Naive thymus-derived CD4-positive, alpha-beta T cell (primary cell): ENCODE measurements at regions of chr7 and their contacts with region 1.

Region 1: GRCh38 chr7:151080522-151081169 is at the start of gene FASTK:
- DNase-seq: peak; percentile 79 to 89 (median 87)
- ATAC-seq: peak; percentile 85
- H3K4me3 ChIP-seq: peak within 1 kb of the TSS; percentile 86
- H3K4me3 Mint-ChIP-seq: peak within 1 kb of the TSS; percentile 87 to 97 (median 88)
- H3K27ac ChIP-seq: peak within 1 kb of the TSS; percentile 93
- H3K27ac Mint-ChIP-seq: peak within 1 kb of the TSS; percentile 72 to 92 (median 88)
- H3K4me1 ChIP-seq: peaks cover 41 to 44% of the 10 kb centered on the region in 2 donors
- H3K4me1 Mint-ChIP-seq: peaks cover 21 to 52% (median 39%) of the 10 kb centered on the region in 7 donors
- H3K27me3 ChIP-seq: no peaks in the 10 kb centered on the region
- H3K27me3 Mint-ChIP-seq: peaks cover 0 to 12% (median 0%) of the 10 kb centered on the region in 5 donors
- total RNA-seq, gene FASTK: 94.1 to 136 (median 101) TPM

Region 2: GRCh38 chr7:149714050-149714909 is 1366.4 kb before region 1 on chr7:
- CTCF ChIA-PET with region 1: no interaction called
- POLR2A ChIA-PET with region 1: no interaction called
- intact Hi-C with region 1: loop called in 1 of 2 experiments (anchors 10 kb)
- DNase-seq: peak; percentile 68 to 89 (median 84)
- ATAC-seq: peak; percentile 99
- H3K4me3 ChIP-seq: peak overlapping the region; percentile 75
- H3K4me3 Mint-ChIP-seq: peak overlapping the region; percentile 71 to 87 (median 80)
- H3K27ac ChIP-seq: peak overlapping the region; percentile 72
- H3K27ac Mint-ChIP-seq: peak overlapping the region in 4 of 9 donors; percentile 5 to 72 (median 54)
- H3K4me1 ChIP-seq: peaks cover 10 to 13% of the 10 kb centered on the region in 2 donors
- H3K4me1 Mint-ChIP-seq: peaks cover 12 to 26% (median 19%) of the 10 kb centered on the region in 7 donors
- H3K27me3 ChIP-seq: no peaks in the 10 kb centered on the region
- H3K27me3 Mint-ChIP-seq: peaks cover 0 to 4% (median 0%) of the 10 kb centered on the region in 5 donors

Region 3: DNA sequence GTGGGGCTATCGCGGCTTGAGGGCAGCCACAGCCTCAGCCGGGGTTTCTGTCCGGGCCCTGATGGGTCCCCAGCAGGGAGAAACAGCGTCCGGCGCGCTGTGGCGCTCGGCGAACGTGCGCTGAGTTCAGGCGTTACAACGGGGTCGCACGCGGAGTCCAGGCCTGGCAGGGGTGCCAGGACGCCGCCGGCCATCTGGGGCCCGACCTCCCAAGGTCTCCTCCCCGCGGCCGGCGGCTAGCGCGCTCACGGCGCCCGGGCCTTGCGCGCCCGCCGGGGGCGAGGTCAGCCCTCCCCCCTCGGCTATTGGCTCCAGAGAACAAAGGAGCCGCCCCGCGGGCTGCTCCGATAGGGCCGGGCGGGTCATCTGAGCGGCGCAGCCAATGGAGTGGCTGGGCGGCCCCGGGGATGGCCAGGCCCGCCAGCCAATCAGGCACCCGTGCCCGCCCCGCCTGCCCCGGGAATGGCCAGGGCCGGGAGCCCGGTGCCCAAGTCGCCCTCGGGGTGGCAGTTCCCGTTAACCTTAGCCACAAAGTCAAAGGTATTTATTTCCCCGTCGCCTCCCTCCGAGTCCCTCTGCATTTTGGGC is 701.7 kb before region 1 on chr7 and contains the start of gene ZNF775:
- CTCF ChIA-PET with region 1: no interaction called
- POLR2A ChIA-PET with region 1: no interaction called
- intact Hi-C with region 1: loop called in 1 of 2 experiments (anchors 5 kb)
- DNase-seq: peak; percentile 87 to 96 (median 90)
- ATAC-seq: peak; percentile 98
- H3K4me3 ChIP-seq: peak within 1 kb of the TSS; percentile 68
- H3K4me3 Mint-ChIP-seq: peak within 1 kb of the TSS; percentile 84 to 95 (median 90)
- H3K27ac ChIP-seq: peak within 1 kb of the TSS; percentile 91
- H3K27ac Mint-ChIP-seq: peak within 1 kb of the TSS; percentile 61 to 95 (median 86)
- H3K4me1 ChIP-seq: peaks cover 4 to 30% of the 10 kb centered on the region in 2 donors
- H3K4me1 Mint-ChIP-seq: peaks cover 32 to 57% (median 46%) of the 10 kb centered on the region in 7 donors
- H3K27me3 ChIP-seq: no peaks in the 10 kb centered on the region
- H3K27me3 Mint-ChIP-seq: no peaks in the 10 kb centered on the region
- total RNA-seq, gene ZNF775: 1.1 to 5.7 (median 4.3) TPM

Region 4: GRCh38 chr7:150974468-150975391 is 105.9 kb before region 1 on chr7:
- CTCF ChIA-PET with region 1: interaction called, 3 read pairs
- POLR2A ChIA-PET with region 1: interaction called, 3 read pairs
- intact Hi-C with region 1: loop called in 1 of 2 experiments (anchors 1 kb)
- DNase-seq: peak; percentile 63 to 84 (median 80)
- ATAC-seq: peak; percentile 85
- H3K4me3 ChIP-seq: peak overlapping the region; percentile 63
- H3K4me3 Mint-ChIP-seq: peak overlapping the region; percentile 85 to 92 (median 88)
- H3K27ac ChIP-seq: peak overlapping the region; percentile 73
- H3K27ac Mint-ChIP-seq: peak overlapping the region; percentile 59 to 97 (median 95)
- H3K4me1 ChIP-seq: peaks cover 20 to 47% of the 10 kb centered on the region in 2 donors
- H3K4me1 Mint-ChIP-seq: peaks cover 33 to 62% (median 55%) of the 10 kb centered on the region in 7 donors
- H3K27me3 ChIP-seq: peaks cover 7 to 13% of the 10 kb centered on the region in 2 donors
- H3K27me3 Mint-ChIP-seq: peaks cover 9 to 36% (median 25%) of the 10 kb centered on the region in 5 donors

Region 5: DNA sequence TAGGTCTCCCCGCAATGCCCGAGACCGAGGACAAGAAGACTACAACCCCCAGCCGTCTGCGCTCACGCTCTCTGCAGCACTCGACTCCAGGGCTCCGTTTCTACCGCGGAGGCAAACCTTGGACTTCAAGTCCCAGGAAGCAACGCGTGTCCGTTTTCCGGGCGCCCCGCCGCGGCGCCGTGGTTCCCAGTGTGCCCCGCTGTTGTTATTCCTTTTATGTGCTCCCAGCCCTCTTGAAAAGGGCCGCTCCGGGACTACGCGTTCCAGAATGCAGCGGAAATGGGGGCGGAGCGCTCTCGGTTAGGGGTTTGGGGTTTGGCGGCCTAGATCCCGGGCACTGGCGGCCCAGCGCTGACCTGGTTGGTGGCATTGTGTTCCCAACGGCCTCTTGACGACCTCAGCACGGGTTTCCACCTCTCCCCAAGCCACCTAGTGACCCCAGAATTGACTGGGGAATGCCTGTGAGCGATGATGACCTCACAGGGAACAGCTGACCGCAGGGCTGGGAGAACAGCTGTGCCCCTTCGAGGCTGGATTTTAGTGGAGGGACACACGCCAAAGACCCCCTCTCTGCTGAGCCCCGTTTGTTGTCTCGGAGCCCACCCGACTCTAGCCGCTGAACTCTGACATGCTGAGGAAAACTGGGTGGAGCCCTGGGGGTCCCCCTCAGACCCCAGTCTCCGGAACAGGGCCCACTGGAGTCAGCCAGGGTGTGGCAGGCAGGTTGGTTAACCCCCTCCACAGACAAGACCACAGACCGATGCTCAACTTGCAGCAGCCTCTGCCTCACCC is 22.5 kb before region 1 on chr7:
- CTCF ChIA-PET with region 1: interaction called, 15 read pairs
- POLR2A ChIA-PET with region 1: interaction called, 14 read pairs
- intact Hi-C with region 1: loop called (anchors 1 kb)
- DNase-seq: peak; percentile 80 to 99 (median 97)
- ATAC-seq: peak; percentile 96
- H3K4me3 ChIP-seq: peak overlapping the region; percentile 78
- H3K4me3 Mint-ChIP-seq: peak overlapping the region; percentile 91 to 99 (median 94)
- H3K27ac ChIP-seq: peak overlapping the region; percentile 92
- H3K27ac Mint-ChIP-seq: peak overlapping the region; percentile 86 to 96 (median 93)
- H3K4me1 ChIP-seq: peaks cover 25 to 32% of the 10 kb centered on the region in 2 donors
- H3K4me1 Mint-ChIP-seq: peaks cover 25 to 41% (median 38%) of the 10 kb centered on the region in 7 donors
- H3K27me3 ChIP-seq: no peaks in the 10 kb centered on the region
- H3K27me3 Mint-ChIP-seq: no peaks in the 10 kb centered on the region

Region 6: DNA sequence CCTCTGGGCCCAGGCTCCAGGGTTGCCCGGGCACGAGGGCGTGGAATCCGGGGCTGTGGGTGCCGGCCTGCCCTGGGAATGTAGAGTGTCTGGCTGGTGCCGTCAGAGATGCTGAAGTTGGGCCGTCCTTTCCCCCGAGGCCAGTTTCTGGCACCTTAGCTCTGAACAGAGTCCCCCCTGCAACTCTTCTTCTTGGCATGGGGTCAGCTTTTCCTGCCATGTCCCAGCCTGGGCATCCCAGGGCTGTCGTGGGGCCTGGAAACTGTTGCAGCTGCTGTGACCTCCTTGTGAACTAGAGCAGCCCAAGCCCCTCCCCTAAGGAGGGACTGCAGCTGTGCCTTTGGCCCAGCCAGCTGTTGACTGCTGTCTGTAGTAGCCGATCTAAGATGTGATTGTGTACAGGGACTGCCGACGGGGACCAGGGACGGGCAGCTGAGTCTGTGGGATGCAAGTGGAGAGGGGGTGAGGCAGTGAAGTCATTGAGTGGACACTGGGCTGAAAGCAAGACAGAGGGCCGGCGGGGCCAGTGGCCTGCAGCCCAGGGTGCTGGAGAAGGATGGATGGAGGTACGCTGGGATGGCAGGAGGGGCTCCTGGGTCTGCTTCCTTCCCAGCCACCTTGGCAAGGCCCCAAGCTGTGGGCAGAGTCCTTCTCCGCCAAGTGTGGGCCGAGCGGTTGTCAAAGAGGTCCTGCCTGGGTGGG is 51.1 kb after region 1 on chr7:
- CTCF ChIA-PET with region 1: no interaction called
- POLR2A ChIA-PET with region 1: no interaction called
- intact Hi-C with region 1: no loop called
- DNase-seq: no peak
- ATAC-seq: no peak
- H3K4me3 ChIP-seq: no peak overlapping the region
- H3K4me3 Mint-ChIP-seq: no peak overlapping the region
- H3K27ac ChIP-seq: no peak overlapping the region
- H3K27ac Mint-ChIP-seq: no peak overlapping the region
- H3K4me1 ChIP-seq: no peaks in the 10 kb centered on the region
- H3K4me1 Mint-ChIP-seq: no peaks in the 10 kb centered on the region
- H3K27me3 ChIP-seq: no peaks in the 10 kb centered on the region
- H3K27me3 Mint-ChIP-seq: no peaks in the 10 kb centered on the region

Region 7: GRCh38 chr7:152463709-152464311 is 1383.2 kb after region 1 on chr7:
- CTCF ChIA-PET with region 1: no interaction called
- POLR2A ChIA-PET with region 1: no interaction called
- intact Hi-C with region 1: loop called in 1 of 2 experiments (anchors 10 kb)
- DNase-seq: peak; percentile 99 to 100 (median 100)
- ATAC-seq: peak; percentile 96
- H3K4me3 ChIP-seq: peak overlapping the region; percentile 82
- H3K4me3 Mint-ChIP-seq: peak overlapping the region; percentile 64 to 96 (median 92)
- H3K27ac ChIP-seq: peak overlapping the region; percentile 99
- H3K27ac Mint-ChIP-seq: peak overlapping the region in 7 of 9 donors; percentile 62 to 93 (median 88)
- H3K4me1 ChIP-seq: peaks cover 5% of the 10 kb centered on the region in 2 donors
- H3K4me1 Mint-ChIP-seq: peaks cover 5 to 17% (median 7%) of the 10 kb centered on the region in 7 donors
- H3K27me3 ChIP-seq: no peaks in the 10 kb centered on the region
- H3K27me3 Mint-ChIP-seq: no peaks in the 10 kb centered on the region